Right cardiac atrium (tissue), 5 donors: ENCODE measurements at regions of chr6 and their contacts with region 1.

Region 1: GRCh38 chr6:53410508-53411258 is 61.9 kb upstream of the ELOVL5 start:
- DNase-seq: peak; percentile 25 to 81 (median 69)
- ATAC-seq: peak; percentile 91 to 93
- H3K4me3 ChIP-seq: no peak overlapping the region
- H3K27ac ChIP-seq: no peak overlapping the region
- H3K4me1 ChIP-seq: no peaks in the 10 kb centered on the region
- H3K27me3 ChIP-seq: no peaks in the 10 kb centered on the region

Region 2: DNA sequence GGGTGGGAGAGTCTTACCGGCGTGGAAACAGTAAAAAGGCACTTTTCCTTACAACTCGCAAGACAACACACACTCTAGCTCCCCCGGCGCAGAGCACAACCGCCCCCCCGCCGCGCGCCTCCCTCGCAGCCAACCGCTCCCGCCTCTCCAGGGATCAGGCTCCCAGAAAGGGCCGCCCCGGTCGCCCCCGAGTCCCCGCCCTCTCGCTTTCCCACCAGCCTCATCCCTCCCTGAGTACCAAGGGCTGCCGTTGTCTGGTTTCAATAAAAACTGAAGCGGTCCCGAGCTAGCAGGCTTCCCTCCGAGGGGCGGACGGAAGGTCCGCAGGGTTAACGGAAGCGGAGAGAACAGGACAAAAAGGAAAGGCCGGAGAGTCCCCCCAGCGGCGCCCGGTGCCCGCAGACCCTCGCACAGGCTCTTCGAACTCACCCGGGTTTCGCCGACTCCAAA is 62.7 kb before region 1 on chr6:
- intact Hi-C with region 1: no loop called
- DNase-seq: peak; percentile 80 to 90 (median 87)
- ATAC-seq: peak; percentile 78 to 89
- H3K4me3 ChIP-seq: peak overlapping the region; percentile 93
- H3K27ac ChIP-seq: peak overlapping the region; percentile 98
- H3K4me1 ChIP-seq: no peaks in the 10 kb centered on the region
- H3K27me3 ChIP-seq: no peaks in the 10 kb centered on the region

Region 3: GRCh38 chr6:53476964-53477363 is 66.3 kb after region 1 on chr6:
- intact Hi-C with region 1: loop called in 2 of 4 experiments (anchors 10 kb)
- DNase-seq: no peak
- ATAC-seq: no peak
- H3K4me3 ChIP-seq: no peak overlapping the region
- H3K27ac ChIP-seq: no peak overlapping the region
- H3K4me1 ChIP-seq: peaks cover under 1% of the 10 kb centered on the region
- H3K27me3 ChIP-seq: no peaks in the 10 kb centered on the region